GM12878 (cell line): ENCODE measurements at regions of chr4 and their contacts with region 1.

Region 1: GRCh38 chr4:1693129-1693896 is 9.2 kb upstream of the FAM53A start:
- DNase-seq: no peak
- ATAC-seq: peak; percentile 99
- H3K4me3 ChIP-seq: no peak overlapping the region
- H3K27ac ChIP-seq: no peak overlapping the region
- H3K4me1 ChIP-seq: no peaks in the 10 kb centered on the region
- H3K27me3 ChIP-seq: no peaks in the 10 kb centered on the region
- CTCF ChIP-seq: peak; percentile 91 to 97 (median 97); a peak in 5 of 6 replicates
- EP300 ChIP-seq: no peak
- POLR2A ChIP-seq: 0 out of 2 replicates have a peak, but pooled peaks have one; percentile 17
- RAD21 ChIP-seq: peak; percentile 69

Region 2: GRCh38 chr4:1646690-1647089 is 46.6 kb before region 1 on chr4:
- CTCF ChIA-PET with region 1: no interaction called
- POLR2A ChIA-PET with region 1: no interaction called
- RAD21 ChIA-PET with region 1: no interaction called
- SMC1A ChIA-PET with region 1: no interaction called
- in situ Hi-C with region 1: no loop called
- intact Hi-C with region 1: no loop called
- DNase-seq: no peak
- ATAC-seq: no peak
- H3K4me3 ChIP-seq: no peak overlapping the region
- H3K27ac ChIP-seq: no peak overlapping the region
- H3K4me1 ChIP-seq: no peaks in the 10 kb centered on the region
- H3K27me3 ChIP-seq: no peaks in the 10 kb centered on the region
- CTCF ChIP-seq: no peak
- EP300 ChIP-seq: no peak
- POLR2A ChIP-seq: no peak
- RAD21 ChIP-seq: no peak

Region 3: DNA sequence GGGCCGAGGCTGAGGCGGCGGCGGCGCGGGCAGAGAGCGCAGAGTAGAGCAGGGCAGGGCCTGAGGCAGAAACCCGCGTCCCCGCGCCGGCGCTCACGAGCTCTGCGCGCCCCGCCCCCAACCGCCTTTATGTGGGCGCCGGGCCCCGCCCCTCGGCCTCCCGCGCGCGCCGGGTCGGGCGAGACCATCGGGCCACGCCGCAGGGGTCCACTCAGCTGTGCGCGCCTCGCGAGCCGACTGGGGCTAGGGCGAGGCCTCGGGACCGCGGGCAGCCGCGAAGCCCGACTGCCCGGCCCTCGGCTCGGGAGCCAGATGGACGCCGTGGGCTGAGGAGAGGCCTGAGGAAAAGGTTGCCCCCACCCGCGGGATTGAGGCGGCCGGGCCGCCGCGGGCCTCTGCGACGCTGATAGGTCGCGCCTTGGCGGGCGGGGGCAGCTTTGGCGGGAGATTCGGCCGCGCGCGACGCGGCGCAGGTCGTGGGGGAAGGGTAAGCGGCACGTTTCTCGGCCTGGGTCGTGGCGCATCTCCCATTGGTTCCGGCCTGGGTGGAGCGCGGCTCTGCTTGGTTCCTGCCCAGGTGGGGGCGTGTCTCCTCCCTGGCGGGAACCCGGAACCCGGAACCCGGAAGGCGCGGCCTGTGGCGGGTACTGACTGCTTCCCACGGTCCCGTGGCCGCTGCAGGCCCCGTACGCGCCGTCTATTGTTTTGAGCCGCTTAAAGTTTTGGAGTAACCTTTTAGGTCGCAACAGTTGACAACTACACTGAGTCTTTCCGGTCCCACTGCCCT is 19.1 kb after region 1 on chr4 and contains the start of gene SLBP:
- CTCF ChIA-PET with region 1: interaction called, 258 read pairs
- POLR2A ChIA-PET with region 1: interaction called, 20 read pairs
- RAD21 ChIA-PET with region 1: interaction called, 23 read pairs
- SMC1A ChIA-PET with region 1: interaction called, 34 read pairs
- in situ Hi-C with region 1: no loop called
- intact Hi-C with region 1: no loop called
- DNase-seq: peak; percentile 90
- ATAC-seq: peak; percentile 85
- H3K4me3 ChIP-seq: peak within 1 kb of the TSS; percentile 100
- H3K27ac ChIP-seq: peak within 1 kb of the TSS; percentile 99
- H3K4me1 ChIP-seq: peaks cover 31% of the 10 kb centered on the region
- H3K27me3 ChIP-seq: no peaks in the 10 kb centered on the region
- CTCF ChIP-seq: no peak
- EP300 ChIP-seq: no peak
- POLR2A ChIP-seq: no peak
- RAD21 ChIP-seq: no peak
- polyA plus RNA-seq, gene SLBP: 94.4 to 101 TPM

Region 4: DNA sequence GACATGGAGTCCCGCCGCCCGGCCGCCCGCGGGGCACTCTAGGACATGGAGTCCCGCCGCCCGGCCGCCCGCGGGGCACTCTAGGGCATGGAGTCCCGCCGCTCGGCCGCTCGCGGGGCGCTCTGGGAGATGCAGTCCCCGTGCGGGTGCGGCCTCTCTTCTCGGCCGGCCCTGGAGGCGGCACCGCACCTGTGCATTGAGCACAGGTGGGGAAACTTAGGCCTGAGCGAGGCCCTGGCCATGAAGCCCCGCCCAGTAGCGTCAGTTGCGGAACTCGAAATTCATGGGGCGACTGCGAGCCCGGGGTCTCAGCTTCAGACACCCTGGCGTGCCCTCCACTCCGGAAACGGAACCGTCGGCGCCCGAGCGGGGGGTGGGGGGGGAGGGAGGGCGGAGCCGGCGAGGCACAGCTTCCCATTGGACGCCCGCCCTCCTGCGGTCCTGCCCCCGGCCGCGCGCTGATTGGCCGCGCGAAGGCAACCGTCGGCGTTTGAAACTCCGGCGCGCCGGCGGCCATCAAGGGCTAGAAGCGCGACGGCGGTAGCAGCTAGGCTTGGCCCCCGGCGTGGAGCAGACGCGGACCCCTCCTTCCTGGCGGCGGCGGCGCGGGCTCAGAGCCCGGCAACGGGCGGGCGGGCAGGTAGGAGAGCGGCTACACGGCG is 27.8 kb after region 1 on chr4 and contains the starts of genes TACC3 and TMEM129:
- CTCF ChIA-PET with region 1: interaction called, 317 read pairs
- POLR2A ChIA-PET with region 1: interaction called, 10 read pairs
- RAD21 ChIA-PET with region 1: interaction called, 77 read pairs
- SMC1A ChIA-PET with region 1: interaction called, 132 read pairs
- in situ Hi-C with region 1: loop called (anchors 5 kb)
- intact Hi-C with region 1: loop called (anchors 1 kb)
- DNase-seq: peak; percentile 77
- ATAC-seq: peak; percentile 86
- H3K4me3 ChIP-seq: peak within 1 kb of the TSS; percentile 94
- H3K27ac ChIP-seq: peak within 1 kb of the TSS; percentile 81
- H3K4me1 ChIP-seq: peaks cover 30% of the 10 kb centered on the region
- H3K27me3 ChIP-seq: no peaks in the 10 kb centered on the region
- CTCF ChIP-seq: no peak
- EP300 ChIP-seq: no peak
- POLR2A ChIP-seq: no peak
- RAD21 ChIP-seq: no peak
- polyA plus RNA-seq, gene TACC3: 2.8 to 8.1 TPM
- polyA plus RNA-seq, gene TMEM129: 0.19 to 0.46 TPM

Region 5: DNA sequence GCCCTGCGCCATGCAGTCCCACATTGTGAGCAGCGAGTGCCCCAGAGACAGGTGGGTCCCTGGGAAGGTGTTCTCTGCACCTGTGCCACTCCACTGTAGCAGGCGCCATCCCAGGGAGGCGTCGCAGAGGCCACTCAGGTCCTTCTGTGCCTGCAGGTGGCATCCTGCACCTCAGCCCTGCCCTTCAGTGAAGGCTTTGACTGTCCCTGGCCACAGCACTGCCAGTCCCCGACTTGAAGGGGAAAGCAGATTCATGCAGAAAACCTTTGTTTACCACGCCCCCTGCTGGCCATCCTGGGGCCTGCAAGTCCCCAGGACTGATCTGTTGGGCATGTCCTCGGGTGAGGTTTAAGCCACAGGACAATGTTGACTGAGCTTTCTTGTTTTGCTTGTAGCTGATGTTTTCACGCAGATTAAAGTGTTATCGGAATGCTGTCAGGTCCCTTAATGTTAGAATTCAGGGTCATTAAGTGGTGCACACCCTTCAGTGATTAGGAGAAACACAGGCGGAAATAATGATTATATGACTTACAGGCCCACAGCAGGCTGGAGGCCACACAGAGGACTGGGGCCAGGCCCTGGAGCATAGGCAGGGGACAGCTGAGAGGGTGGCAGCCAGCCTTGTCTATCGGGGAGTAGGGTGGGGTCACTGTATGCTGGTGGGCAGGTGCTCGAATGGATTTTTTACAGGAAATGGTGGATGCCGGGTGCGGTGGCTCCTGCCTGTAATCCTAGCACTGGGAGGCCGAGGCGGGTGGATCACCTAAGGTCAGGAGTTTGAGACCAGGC is 33.0 kb after region 1 on chr4:
- CTCF ChIA-PET with region 1: interaction called, 317 read pairs
- POLR2A ChIA-PET with region 1: interaction called, 10 read pairs
- RAD21 ChIA-PET with region 1: interaction called, 77 read pairs
- SMC1A ChIA-PET with region 1: interaction called, 132 read pairs
- in situ Hi-C with region 1: loop called (anchors 5 kb)
- intact Hi-C with region 1: loop called (anchors 1 kb)
- DNase-seq: peak; percentile 45
- ATAC-seq: peak; percentile 73
- H3K4me3 ChIP-seq: no peak overlapping the region
- H3K27ac ChIP-seq: no peak overlapping the region
- H3K4me1 ChIP-seq: peaks cover 18% of the 10 kb centered on the region
- H3K27me3 ChIP-seq: no peaks in the 10 kb centered on the region
- CTCF ChIP-seq: peak; percentile 89 to 100 (median 98)
- EP300 ChIP-seq: no peak
- POLR2A ChIP-seq: peak; percentile 37; the same call in 1 of the 2 replicates
- RAD21 ChIP-seq: peak; percentile 84

Region 6: DNA sequence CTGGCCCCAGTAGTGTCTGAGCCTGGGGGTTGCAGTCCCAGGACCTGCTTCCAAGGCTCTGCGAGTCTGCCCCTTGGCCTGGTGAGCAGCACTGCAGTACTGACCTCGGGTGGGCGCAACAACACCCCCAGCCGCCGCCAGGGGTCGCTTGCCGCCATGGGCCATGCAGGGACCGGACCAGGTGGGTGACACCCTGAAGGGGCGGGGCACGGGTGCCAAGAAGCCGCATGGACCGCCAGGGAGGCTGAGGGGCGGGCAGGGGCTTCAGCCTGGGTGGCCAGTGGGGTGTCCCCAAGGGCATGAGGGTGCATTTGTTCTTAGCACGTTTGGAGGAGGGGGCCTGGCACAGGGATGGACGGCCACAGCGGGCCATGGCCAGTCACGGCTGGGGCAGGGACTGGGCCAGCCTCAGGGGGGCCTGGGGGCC is 53.0 kb after region 1 on chr4:
- CTCF ChIA-PET with region 1: interaction called, 10 read pairs
- POLR2A ChIA-PET with region 1: no interaction called
- RAD21 ChIA-PET with region 1: interaction called, 4 read pairs
- SMC1A ChIA-PET with region 1: interaction called, 3 read pairs
- in situ Hi-C with region 1: no loop called
- intact Hi-C with region 1: no loop called
- DNase-seq: no peak
- ATAC-seq: peak; percentile 93
- H3K4me3 ChIP-seq: no peak overlapping the region
- H3K27ac ChIP-seq: no peak overlapping the region
- H3K4me1 ChIP-seq: no peaks in the 10 kb centered on the region
- H3K27me3 ChIP-seq: no peaks in the 10 kb centered on the region
- CTCF ChIP-seq: peak; percentile 65 to 93 (median 78)
- EP300 ChIP-seq: no peak
- POLR2A ChIP-seq: no peak
- RAD21 ChIP-seq: peak; percentile 69

Region 7: GRCh38 chr4:2510351-2511259 is 817.3 kb after region 1 on chr4:
- CTCF ChIA-PET with region 1: no interaction called
- POLR2A ChIA-PET with region 1: no interaction called
- RAD21 ChIA-PET with region 1: no interaction called
- SMC1A ChIA-PET with region 1: no interaction called
- in situ Hi-C with region 1: no loop called
- intact Hi-C with region 1: no loop called
- DNase-seq: no peak
- ATAC-seq: peak; percentile 52
- H3K4me3 ChIP-seq: no peak overlapping the region
- H3K27ac ChIP-seq: peak overlapping the region; percentile 12; the same call in 1 of the 2 replicates
- H3K4me1 ChIP-seq: peaks cover 26% of the 10 kb centered on the region
- H3K27me3 ChIP-seq: no peaks in the 10 kb centered on the region
- CTCF ChIP-seq: no peak
- EP300 ChIP-seq: no peak
- POLR2A ChIP-seq: no peak; the same call in none of the 2 replicates
- RAD21 ChIP-seq: no peak